HepG2 (cell line): ENCODE measurements at regions of chr1 and their contacts with region 1.

Region 1: DNA sequence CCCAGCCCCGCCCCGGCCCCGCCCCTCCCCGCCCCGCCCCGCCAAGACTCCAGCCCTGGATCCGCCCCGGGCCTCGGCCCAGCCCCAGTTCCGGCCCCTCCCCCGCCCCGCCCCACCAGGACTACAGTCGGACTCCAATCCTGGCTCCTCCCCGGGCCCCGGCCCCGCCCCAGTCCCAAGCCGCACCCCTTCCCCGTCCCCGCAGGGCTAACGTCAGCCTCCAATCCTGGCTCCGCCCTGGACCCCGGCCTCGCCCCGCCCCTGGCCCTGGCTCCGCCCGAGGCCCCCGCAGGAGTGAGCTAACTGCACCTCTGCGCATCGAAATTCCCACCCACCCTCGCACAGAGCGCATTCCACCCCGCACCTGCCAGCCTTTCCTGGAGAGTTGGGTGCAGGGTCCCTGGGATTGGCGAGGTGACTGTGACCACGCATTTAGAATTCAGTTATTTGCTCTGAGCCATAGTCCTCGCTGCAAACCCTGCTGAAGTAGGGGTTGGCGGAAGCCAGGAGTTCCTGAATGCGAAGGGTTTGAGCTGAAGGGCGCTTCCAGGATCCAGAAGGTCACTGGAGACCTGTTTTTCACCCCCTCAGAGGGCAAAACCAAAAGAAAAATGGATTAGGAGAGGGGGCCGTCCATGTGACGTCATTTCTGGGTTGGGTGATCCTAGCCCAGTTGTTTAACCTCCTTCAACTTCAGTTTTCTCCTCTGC is 588 bp upstream of the IGSF8 start:
- DNase-seq: peak; percentile 85
- ATAC-seq: peak; percentile 79
- H3K4me3 ChIP-seq: peak overlapping the region; percentile 69 to 76 (median 70)
- H3K27ac ChIP-seq: peak overlapping the region; percentile 67
- H3K4me1 ChIP-seq: peaks cover 87% of the 10 kb centered on the region
- H3K27me3 ChIP-seq: no peaks in the 10 kb centered on the region
- CTCF ChIP-seq: peak; percentile 10; the same call in 1 of the 2 replicates
- EP300 ChIP-seq: no peak
- POLR2A ChIP-seq: peak; percentile 20 to 72; a peak in 2 of 4 replicates
- RAD21 ChIP-seq: no peak

Region 2: GRCh38 chr1:159881930-159882839 is 216.8 kb before region 1 on chr1:
- CTCF ChIA-PET with region 1: no interaction called
- POLR2A ChIA-PET with region 1: no interaction called
- in situ Hi-C with region 1: no loop called
- intact Hi-C with region 1: no loop called
- DNase-seq: peak; percentile 32
- ATAC-seq: no peak
- H3K4me3 ChIP-seq: no peak overlapping the region
- H3K27ac ChIP-seq: no peak overlapping the region
- H3K4me1 ChIP-seq: no peaks in the 10 kb centered on the region
- H3K27me3 ChIP-seq: peaks cover 0 to 1% of the 10 kb centered on the region in 2 experiments; a peak in 2 of 5 replicates
- CTCF ChIP-seq: no peak
- EP300 ChIP-seq: no peak
- POLR2A ChIP-seq: no peak
- RAD21 ChIP-seq: no peak

Region 3: GRCh38 chr1:160031365-160032164 is 67.4 kb before region 1 on chr1 and contains the start of gene PIGM:
- CTCF ChIA-PET with region 1: no interaction called
- POLR2A ChIA-PET with region 1: no interaction called
- in situ Hi-C with region 1: no loop called
- intact Hi-C with region 1: no loop called
- DNase-seq: peak; percentile 94
- ATAC-seq: peak; percentile 98
- H3K4me3 ChIP-seq: peak within 1 kb of the TSS; percentile 72 to 92 (median 84)
- H3K27ac ChIP-seq: peak within 1 kb of the TSS; percentile 76
- H3K4me1 ChIP-seq: peaks cover 28% of the 10 kb centered on the region
- H3K27me3 ChIP-seq: no peaks in the 10 kb centered on the region; a peak in 1 of 5 replicates
- CTCF ChIP-seq: peak; percentile 17; the same call in 1 of the 2 replicates
- EP300 ChIP-seq: 0 out of 4 replicates have a peak, but pooled peaks of 1 of the 2 experiments have one; percentile 16
- POLR2A ChIP-seq: peak; percentile 53 to 78; a peak in 3 of 4 replicates
- RAD21 ChIP-seq: no peak
- total RNA-seq, gene PIGM: 2.9 and 4.6 TPM in 2 replicates

Region 4: GRCh38 chr1:160149716-160150115 is 50.7 kb after region 1 on chr1:
- CTCF ChIA-PET with region 1: no interaction called
- POLR2A ChIA-PET with region 1: no interaction called
- in situ Hi-C with region 1: no loop called
- intact Hi-C with region 1: no loop called
- DNase-seq: no peak
- ATAC-seq: no peak
- H3K4me3 ChIP-seq: no peak overlapping the region
- H3K27ac ChIP-seq: no peak overlapping the region
- H3K4me1 ChIP-seq: peaks cover 37% of the 10 kb centered on the region
- H3K27me3 ChIP-seq: no peaks in the 10 kb centered on the region
- CTCF ChIP-seq: no peak
- EP300 ChIP-seq: no peak
- POLR2A ChIP-seq: no peak
- RAD21 ChIP-seq: no peak

Region 5: GRCh38 chr1:160193091-160193819 is 94.2 kb after region 1 on chr1:
- CTCF ChIA-PET with region 1: interaction called, 4 read pairs
- POLR2A ChIA-PET with region 1: interaction called, 3 read pairs
- in situ Hi-C with region 1: no loop called
- intact Hi-C with region 1: loop called (anchors 1 kb)
- DNase-seq: peak; percentile 85
- ATAC-seq: peak; percentile 88
- H3K4me3 ChIP-seq: peak overlapping the region; percentile 47 to 70 (median 55)
- H3K27ac ChIP-seq: peak overlapping the region; percentile 53
- H3K4me1 ChIP-seq: peaks cover 34% of the 10 kb centered on the region
- H3K27me3 ChIP-seq: peaks cover 1 to 21% of the 10 kb centered on the region in 2 experiments; a peak in 3 of 5 replicates
- CTCF ChIP-seq: peak; percentile 95
- EP300 ChIP-seq: peak in 1 of 2 experiments; percentile 24; a peak in 1 of 4 replicates
- POLR2A ChIP-seq: no peak
- RAD21 ChIP-seq: peak; percentile 95

Region 6: GRCh38 chr1:160251687-160252526 is 152.9 kb after region 1 on chr1:
- CTCF ChIA-PET with region 1: interaction called, 13 read pairs
- POLR2A ChIA-PET with region 1: interaction called, 6 read pairs
- in situ Hi-C with region 1: no loop called
- intact Hi-C with region 1: loop called (anchors 1 kb)
- DNase-seq: peak; percentile 81
- ATAC-seq: peak; percentile 98
- H3K4me3 ChIP-seq: no peak overlapping the region
- H3K27ac ChIP-seq: peak overlapping the region; percentile 22
- H3K4me1 ChIP-seq: peaks cover 23% of the 10 kb centered on the region
- H3K27me3 ChIP-seq: no peaks in the 10 kb centered on the region
- CTCF ChIP-seq: peak; percentile 83
- EP300 ChIP-seq: no peak
- POLR2A ChIP-seq: no peak
- RAD21 ChIP-seq: peak; percentile 78

Region 7: DNA sequence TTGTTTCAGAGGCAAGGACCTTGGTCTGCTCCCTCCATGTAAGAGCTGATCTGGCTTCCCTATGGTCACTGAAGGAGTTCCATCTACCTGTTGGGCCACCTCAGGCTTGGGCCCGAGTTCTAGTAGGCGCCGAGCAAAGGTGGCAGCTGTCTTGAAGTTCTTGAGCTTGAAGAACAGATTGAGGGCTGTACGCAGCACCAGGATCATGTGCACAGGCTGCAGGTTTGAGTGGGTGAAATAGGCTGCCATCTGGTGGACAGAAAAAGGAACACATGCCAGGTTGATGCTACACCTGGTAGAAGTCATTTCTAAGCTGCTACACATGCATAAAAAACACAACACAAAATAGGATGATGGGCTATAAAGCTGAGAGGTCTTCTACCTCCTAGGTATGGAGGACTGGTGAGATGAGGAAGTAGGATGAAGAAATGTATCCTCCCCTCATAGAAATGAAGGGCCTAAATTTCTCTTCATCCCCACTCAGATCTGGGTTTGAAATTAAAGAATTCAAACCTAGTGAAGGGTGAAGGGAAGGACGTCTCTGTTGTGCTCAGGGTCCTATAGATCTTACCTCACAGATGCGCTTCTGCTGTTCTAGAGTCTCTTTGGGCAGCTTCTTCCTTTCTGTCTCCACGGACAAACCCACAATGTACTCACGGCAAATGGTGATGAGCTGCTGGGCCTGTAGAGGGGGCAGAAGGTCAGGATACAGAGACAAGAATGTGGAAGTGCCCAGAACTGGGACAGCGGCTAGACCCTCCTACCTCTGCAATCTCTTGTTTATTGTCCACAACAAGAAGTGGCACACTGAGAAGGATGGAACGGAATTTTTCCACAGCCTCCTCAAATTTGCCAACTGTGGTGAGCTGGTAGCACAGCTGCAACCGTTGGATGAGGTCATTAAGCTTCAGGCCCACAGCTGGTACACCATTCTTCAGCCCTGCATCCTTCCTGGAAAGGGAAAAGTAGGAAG is 192.5 kb after region 1 on chr1:
- CTCF ChIA-PET with region 1: interaction called, 11 read pairs
- POLR2A ChIA-PET with region 1: interaction called, 3 read pairs
- in situ Hi-C with region 1: no loop called
- intact Hi-C with region 1: no loop called
- DNase-seq: peak; percentile 65
- ATAC-seq: peak; percentile 91
- H3K4me3 ChIP-seq: no peak overlapping the region
- H3K27ac ChIP-seq: no peak overlapping the region
- H3K4me1 ChIP-seq: peaks cover 17% of the 10 kb centered on the region
- H3K27me3 ChIP-seq: no peaks in the 10 kb centered on the region
- CTCF ChIP-seq: peak; percentile 84
- EP300 ChIP-seq: no peak
- POLR2A ChIP-seq: no peak
- RAD21 ChIP-seq: peak; percentile 31; the same call in 1 of the 2 replicates